Activated CD4-positive, alpha-beta T cell treated with anti-CD3 and anti-CD28 coated beads for 36 hours (primary cell): ENCODE measurements at regions of chr15 and their contacts with region 1.

Region 1: DNA sequence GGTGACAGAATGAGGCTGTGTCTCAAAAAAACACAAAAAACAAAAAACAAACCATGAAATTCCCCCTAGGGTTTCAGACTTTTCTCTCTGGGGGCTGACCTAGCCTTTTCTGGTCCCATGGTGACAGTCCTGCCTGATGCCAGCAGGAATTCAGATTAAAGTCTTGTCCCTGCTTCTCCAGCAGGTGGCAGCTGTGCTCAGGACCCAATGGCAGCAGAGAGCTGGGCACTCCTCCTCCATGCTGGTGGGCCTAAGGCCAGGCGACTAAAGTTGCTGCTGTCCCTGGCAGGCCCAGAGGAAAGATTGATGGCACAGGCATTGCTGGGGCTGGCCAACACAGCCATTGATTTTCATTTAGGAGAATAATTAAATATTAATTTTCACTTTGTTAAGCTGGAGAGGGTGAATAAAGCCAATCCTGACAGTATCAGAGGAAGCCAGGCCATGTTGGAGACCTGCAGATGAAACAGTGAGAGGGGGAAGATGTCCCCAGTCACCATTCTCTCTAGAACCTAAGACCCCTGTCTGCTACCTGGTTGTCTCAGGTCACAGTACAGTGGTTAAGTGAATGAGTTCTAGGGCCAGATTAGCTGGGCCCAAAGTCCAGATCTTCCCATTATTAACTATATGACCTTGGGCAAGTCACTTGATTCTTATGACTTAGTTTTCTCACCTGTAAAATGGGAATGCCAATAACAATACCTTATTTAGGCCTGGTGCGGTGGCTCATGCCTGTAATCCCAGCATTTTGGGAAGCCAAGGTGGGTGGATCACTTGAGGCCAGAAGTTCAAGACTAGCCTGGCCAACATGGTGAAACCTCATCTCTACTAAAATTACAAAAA is 7.1 kb downstream of the CELF6 start:
- DNase-seq: peak; percentile 80
- ATAC-seq: peak; percentile 99
- H3K4me3 Mint-ChIP-seq: no peak overlapping the region
- H3K27ac Mint-ChIP-seq: no peak overlapping the region
- H3K4me1 Mint-ChIP-seq: no peaks in the 10 kb centered on the region
- H3K27me3 Mint-ChIP-seq: no peaks in the 10 kb centered on the region

Region 2: GRCh38 chr15:72136170-72137051 is 176.4 kb before region 1 on chr15:
- CTCF ChIA-PET with region 1: no interaction called
- POLR2A ChIA-PET with region 1: no interaction called
- intact Hi-C with region 1: no loop called
- DNase-seq: no peak
- ATAC-seq: no peak
- H3K4me3 Mint-ChIP-seq: no peak overlapping the region
- H3K27ac Mint-ChIP-seq: no peak overlapping the region
- H3K4me1 Mint-ChIP-seq: no peaks in the 10 kb centered on the region
- H3K27me3 Mint-ChIP-seq: no peaks in the 10 kb centered on the region

Region 3: GRCh38 chr15:72155635-72156616 is 156.9 kb before region 1 on chr15:
- CTCF ChIA-PET with region 1: no interaction called
- POLR2A ChIA-PET with region 1: no interaction called
- intact Hi-C with region 1: no loop called
- DNase-seq: peak; percentile 90
- ATAC-seq: peak; percentile 95
- H3K4me3 Mint-ChIP-seq: peak overlapping the region; percentile 53
- H3K27ac Mint-ChIP-seq: peak overlapping the region; percentile 7
- H3K4me1 Mint-ChIP-seq: peaks cover 5% of the 10 kb centered on the region
- H3K27me3 Mint-ChIP-seq: peaks cover 2% of the 10 kb centered on the region

Region 4: DNA sequence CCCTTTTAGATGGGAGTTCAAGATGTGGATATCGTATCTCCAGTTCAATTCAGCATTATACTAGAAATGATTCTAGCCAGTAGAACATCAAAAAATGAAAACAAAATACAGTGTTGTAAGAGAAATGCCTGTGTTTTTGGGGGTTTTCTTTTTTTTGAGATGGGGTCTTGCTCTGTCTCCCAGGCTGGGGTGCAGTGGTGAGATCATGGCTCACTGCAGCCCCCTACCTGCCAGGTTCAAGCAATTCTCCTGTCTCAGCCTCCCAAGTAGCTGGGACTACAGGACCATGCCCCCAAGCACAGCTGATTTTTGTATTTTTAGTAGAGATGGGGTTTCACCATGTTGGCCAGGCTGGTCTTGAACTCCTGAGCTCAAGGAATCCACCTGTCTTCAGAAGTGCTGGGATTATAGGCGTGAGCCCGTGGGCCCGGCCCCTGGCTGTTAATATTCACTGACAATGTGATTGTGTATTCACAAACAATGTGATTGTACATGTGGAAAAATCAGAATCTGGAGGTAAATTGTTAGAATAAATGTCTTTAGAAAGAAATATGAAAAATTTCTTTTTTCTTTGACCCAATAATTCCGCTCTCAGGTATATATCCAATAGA is 220.3 kb after region 1 on chr15:
- CTCF ChIA-PET with region 1: interaction called, 5 read pairs
- POLR2A ChIA-PET with region 1: no interaction called
- intact Hi-C with region 1: loop called (anchors 1 to 2 kb)
- DNase-seq: peak; percentile 56
- ATAC-seq: peak; percentile 58
- H3K4me3 Mint-ChIP-seq: no peak overlapping the region
- H3K27ac Mint-ChIP-seq: no peak overlapping the region
- H3K4me1 Mint-ChIP-seq: peaks cover 44% of the 10 kb centered on the region
- H3K27me3 Mint-ChIP-seq: no peaks in the 10 kb centered on the region